Activated CD4-positive, alpha-beta T cell treated with anti-CD3 and anti-CD28 coated beads, Interleukin-2, amount 10 ng/mL, durations not matched to agents 24 days and 14 days (primary cell): ENCODE measurements at regions of chr19 and their contacts with region 1.

Region 1: DNA sequence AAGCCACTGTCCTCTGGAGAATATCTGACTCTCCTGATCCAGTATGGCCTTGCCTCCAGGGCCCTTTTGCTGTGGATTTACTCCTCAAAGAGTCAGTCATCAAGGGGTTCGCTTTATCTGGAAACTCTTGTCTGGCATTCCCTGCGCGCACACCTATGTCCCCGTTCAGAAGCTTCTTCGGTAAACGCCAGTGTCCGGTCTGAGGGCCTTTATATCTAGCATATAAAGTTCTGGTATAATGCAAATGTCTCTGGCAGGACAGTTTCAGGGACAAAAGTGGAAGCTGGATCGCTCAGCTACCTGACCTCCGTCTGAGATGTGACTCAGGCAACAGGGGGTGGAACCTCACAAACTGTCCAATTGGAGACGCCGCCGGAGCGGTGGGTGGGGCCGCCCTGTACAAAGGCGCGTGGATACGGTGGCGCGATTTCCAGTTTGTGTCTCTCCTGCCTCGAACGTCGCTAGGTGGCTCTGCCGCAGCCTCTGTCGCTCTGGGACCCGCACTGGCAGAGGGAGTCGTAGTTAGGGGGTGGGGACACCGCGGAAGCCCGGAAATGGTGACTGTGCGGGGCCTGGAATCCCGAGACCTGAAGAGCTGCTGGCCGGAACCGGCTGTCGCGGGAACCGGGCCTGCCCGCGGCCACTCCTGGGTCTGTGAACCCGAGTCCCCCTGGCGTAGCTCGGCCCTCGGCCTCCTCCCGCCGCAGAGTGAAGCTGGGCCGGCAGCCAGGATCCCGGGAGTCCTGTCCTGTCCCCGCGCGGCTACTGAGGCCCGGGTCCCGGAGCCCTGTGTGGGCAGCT is 10.6 kb upstream of the ZNF709 start:
- DNase-seq: peak; percentile 95
- H3K4me3 Mint-ChIP-seq: peak overlapping the region; percentile 83
- H3K27ac Mint-ChIP-seq: peak overlapping the region; percentile 79
- H3K4me1 Mint-ChIP-seq: peaks cover 11% of the 10 kb centered on the region
- H3K27me3 Mint-ChIP-seq: no peaks in the 10 kb centered on the region

Region 2: DNA sequence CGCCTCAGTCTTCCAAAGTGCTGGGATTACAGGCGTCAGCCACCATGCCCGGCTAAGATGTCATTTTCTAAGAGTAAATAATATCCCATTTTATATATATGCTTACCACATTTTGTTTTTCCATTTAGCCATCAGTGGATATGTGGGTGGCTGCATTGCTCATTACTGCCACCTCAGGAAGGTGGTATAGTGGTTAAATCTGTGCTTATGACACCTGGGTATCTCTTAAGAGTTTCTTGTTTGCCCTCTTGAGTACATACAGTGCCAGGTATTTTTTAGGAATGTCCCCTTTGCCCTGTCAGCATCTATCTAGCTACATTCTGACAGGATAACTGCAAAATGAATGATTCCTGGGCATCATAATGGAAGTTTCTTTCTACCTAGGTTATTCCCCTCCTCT is 593.0 kb before region 1 on chr19:
- intact Hi-C with region 1: no loop called
- DNase-seq: no peak
- H3K4me3 Mint-ChIP-seq: no peak overlapping the region
- H3K27ac Mint-ChIP-seq: no peak overlapping the region
- H3K4me1 Mint-ChIP-seq: no peaks in the 10 kb centered on the region
- H3K27me3 Mint-ChIP-seq: no peaks in the 10 kb centered on the region

Region 3: DNA sequence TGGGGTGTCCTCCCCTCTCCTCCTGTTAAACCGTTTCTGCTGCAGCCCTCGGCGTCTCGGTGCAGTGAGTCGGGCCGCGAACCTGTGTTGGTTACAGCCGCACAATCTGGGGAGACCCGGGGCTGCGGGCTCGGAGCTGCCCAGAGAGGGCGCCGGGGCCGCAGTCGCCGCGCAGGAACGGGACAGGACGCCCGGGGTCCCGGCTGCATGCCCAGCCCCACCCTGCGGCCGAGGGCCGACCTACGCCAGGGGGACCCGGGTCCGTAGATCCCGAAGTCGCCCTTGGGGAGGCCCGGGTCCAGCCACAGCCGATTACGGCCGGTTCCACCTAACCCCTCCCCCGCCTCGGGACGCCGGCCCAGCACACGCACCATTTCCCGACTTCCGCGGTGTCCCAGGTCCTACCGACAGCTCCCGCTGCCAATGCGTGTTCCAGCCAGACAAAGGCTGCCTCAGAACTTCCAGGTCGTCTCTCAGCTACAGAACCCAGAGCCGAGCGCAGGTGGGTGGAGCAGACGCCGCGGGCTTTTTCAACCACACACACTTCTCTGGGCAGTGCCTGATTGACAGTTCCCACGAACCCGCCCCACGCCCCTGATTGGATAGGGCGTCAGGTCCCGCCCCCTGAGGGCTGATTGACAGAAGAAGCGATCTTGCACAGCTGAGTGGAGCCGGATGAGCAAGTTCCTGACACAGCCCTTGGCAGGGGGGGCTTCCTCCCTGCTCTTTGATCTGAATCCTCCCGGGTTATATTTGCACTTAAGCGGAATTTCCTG is 54.5 kb before region 1 on chr19 and contains the start of gene ZNF443:
- intact Hi-C with region 1: loop called (anchors 1 kb)
- DNase-seq: peak; percentile 100
- H3K4me3 Mint-ChIP-seq: peak within 1 kb of the TSS; percentile 98
- H3K27ac Mint-ChIP-seq: peak within 1 kb of the TSS; percentile 92
- H3K4me1 Mint-ChIP-seq: peaks cover 11% of the 10 kb centered on the region
- H3K27me3 Mint-ChIP-seq: no peaks in the 10 kb centered on the region
- total RNA-seq, gene ZNF443: 4.8 and 5.7 TPM in 2 replicates

Region 4: DNA sequence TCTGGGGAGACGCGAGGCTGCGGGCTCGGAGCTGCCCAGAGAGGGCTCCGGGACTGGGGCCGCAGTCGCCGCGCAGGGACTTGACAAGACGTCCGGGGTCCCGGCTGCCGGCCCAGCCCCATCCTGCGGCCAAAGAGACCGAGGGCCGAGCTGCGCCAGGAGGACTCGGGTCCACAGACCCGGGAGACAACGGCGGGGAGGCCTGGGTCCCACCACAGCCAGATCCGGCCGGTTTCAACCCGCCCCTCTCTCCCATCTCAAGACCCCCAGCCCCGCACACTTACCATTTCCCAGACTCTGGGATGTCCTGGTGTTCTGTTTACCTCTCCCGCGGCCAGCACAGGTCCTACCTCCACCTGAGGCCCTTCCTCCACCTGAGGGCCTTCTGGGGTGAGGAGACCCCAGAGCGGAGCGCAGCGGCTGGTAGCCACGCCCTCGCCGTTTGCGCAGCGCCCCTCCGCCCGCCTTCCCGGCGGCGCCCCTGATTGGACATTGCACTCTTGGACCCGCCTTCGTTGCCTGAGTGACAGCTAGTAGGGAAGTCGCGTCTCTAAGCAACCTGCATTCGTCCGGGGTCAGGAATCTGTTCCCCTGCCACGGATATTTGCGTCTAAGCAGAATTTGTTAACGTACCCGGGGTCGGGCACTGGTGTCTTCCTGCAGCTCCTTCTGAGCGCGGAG is 10.7 kb before region 1 on chr19 and contains the start of gene ZNF709:
- intact Hi-C with region 1: loop called (anchors 1 kb)
- DNase-seq: peak; percentile 96
- H3K4me3 Mint-ChIP-seq: peak within 1 kb of the TSS; percentile 93
- H3K27ac Mint-ChIP-seq: peak within 1 kb of the TSS; percentile 26
- H3K4me1 Mint-ChIP-seq: peaks cover 22% of the 10 kb centered on the region
- H3K27me3 Mint-ChIP-seq: no peaks in the 10 kb centered on the region
- total RNA-seq, gene ZNF709: 1.3 and 1.5 TPM in 2 replicates

Region 5: GRCh38 chr19:12551060-12551832 is 56.0 kb after region 1 on chr19 and contains the start of gene ZNF564:
- intact Hi-C with region 1: loop called (anchors 5 kb)
- DNase-seq: peak; percentile 98
- H3K4me3 Mint-ChIP-seq: peak within 1 kb of the TSS; percentile 95
- H3K27ac Mint-ChIP-seq: peak within 1 kb of the TSS; percentile 96
- H3K4me1 Mint-ChIP-seq: peaks cover 23% of the 10 kb centered on the region
- H3K27me3 Mint-ChIP-seq: no peaks in the 10 kb centered on the region
- total RNA-seq, gene ZNF564: 5.6 and 7.0 TPM in 2 replicates